HAP-1 (cell line): ENCODE measurements at regions of chr17 and their contacts with region 1.

Region 1: DNA sequence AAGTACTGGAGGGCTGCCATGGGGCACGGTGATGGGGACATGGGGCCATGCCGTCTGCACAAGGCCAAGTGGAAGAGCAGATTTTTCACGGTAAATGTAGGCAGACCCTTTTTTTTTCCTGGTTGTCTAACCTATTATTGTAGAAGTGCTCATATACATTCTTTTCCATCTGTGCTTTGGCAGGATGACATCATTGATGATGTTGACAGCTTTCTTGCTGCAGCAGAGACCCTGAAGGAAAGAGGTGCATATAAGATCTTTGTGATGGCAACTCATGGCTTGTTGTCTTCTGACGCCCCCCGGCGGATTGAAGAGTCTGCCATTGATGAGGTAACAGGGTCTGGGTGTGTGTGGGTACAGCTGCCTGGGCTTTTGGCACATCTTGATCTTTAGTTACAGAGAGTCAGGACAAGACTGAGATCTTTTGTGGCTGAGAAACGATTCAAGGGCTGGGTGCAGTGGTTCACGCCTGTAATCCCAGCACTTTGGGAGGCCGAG is 23.3 kb upstream of the SLC5A10 start:
- DNase-seq: no peak
- H3K4me3 ChIP-seq: no peak overlapping the region
- H3K4me1 ChIP-seq: no peaks in the 10 kb centered on the region
- H3K27me3 ChIP-seq: no peaks in the 10 kb centered on the region

Region 2: DNA sequence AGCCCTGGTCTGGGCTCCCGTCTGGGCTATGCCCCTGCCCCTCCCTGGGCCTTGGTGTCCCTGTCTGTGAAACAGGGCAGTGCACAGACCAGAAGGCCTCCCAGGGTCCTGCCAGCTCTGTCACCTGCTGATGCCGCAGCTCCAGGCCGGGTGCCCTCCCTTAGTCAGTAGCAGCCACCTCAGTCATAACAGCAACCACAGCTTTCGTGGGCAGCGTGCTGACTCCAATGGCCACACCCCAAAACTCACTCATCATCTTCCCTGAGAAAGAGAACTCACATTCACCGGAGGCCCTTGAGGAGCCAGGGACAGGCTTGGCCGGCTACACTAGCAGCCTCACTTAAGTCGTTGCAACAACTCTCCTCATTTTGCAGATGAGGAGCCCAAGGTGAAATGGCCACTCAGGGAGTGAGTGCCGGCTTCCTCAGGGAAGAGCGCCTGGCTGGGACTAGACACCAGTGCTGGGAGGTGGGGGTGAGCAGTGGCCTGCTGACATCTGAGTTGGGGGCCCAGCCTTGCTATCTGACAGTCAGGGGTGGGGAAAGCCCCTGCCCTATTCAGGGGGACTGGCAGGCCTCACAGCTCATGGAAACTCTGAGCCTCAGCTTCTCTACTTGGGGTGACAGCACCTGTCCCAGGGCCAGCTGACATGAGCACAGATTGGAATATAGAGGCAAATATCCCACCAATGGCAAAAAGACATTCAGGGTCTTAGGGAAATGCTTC is 45.9 kb after region 1 on chr17:
- in situ Hi-C with region 1: loop called (anchors 5 kb)
- DNase-seq: no peak
- H3K4me3 ChIP-seq: no peak overlapping the region
- H3K4me1 ChIP-seq: no peaks in the 10 kb centered on the region
- H3K27me3 ChIP-seq: no peaks in the 10 kb centered on the region